ENCODE measurements at regions of chr18 and their contacts with region 1.

Region 1: GRCh38 chr18:74291771-74292540 is at the start of gene CYB5A:
- DNase-seq: peak; percentile 98 to 99
- ATAC-seq: peak; percentile 99 to 100 (median 99)
- H3K4me3 ChIP-seq: peak within 1 kb of the TSS; percentile 95
- H3K27ac ChIP-seq: peak within 1 kb of the TSS; percentile 53
- H3K4me1 ChIP-seq: no peaks in the 10 kb centered on the region
- H3K27me3 ChIP-seq: no peaks in the 10 kb centered on the region
- CTCF ChIP-seq: no peak
- total RNA-seq, gene CYB5A: 13.4 to 27.1 (median 22.1) TPM

Region 2: DNA sequence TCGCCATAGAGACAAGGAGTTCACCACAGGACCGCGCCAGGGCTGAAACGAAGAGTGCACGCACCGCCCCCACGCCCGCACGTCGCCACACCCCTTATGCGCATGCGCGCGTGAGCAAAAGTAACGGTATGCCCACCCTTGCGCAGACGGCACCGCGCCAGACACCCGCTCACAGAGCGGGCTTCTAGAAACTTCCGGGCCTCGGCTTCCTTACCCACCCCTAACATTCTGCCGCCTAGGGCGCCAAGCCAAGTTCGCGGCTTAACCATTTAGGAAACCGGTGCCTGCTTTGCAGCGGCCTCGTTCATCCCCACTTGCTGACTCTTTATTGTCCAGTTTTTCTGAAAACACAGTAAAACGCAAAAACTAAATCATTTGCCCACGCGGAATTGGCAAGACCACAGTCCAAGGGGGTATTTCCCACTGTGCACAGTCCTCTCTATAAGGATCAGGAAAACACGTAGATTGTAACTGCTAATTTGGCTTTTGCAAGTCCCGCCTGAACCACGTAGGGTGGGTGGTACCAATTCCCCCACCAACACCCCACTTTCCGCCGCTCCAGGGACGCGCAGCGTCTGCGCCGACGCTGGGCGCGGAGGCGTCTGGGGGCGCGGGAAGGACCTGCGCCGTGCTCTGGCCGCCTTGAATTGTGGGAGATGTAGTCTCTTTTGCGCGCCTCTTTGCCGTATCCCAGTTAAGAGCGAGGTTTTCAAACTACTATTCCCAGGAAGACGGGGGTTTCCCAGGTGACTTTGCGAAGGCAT is 144.0 kb before region 1 on chr18 and contains the starts of genes FBXO15 and TIMM21:
- intact Hi-C with region 1: loop called (anchors 5 kb)
- DNase-seq: peak; percentile 98 to 99
- ATAC-seq: peak; percentile 96 to 97 (median 97)
- H3K4me3 ChIP-seq: peak within 1 kb of the TSS; percentile 83
- H3K27ac ChIP-seq: peak within 1 kb of the TSS; percentile 93
- H3K4me1 ChIP-seq: peaks cover 32% of the 10 kb centered on the region
- H3K27me3 ChIP-seq: no peaks in the 10 kb centered on the region
- CTCF ChIP-seq: no peak
- total RNA-seq, gene FBXO15: 0.30 TPM in 2 of 4 donors, not detected in the others
- total RNA-seq, gene TIMM21: 52.6 to 91.6 (median 66.4) TPM